Activated CD4-positive, alpha-beta T cell treated with anti-CD3 and anti-CD28 coated beads, Interleukin-2, amount 10 ng/mL, durations not matched to agents 7 days and 5 days (primary cell): ENCODE measurements at regions of chr20 and their contacts with region 1.

Region 1: DNA sequence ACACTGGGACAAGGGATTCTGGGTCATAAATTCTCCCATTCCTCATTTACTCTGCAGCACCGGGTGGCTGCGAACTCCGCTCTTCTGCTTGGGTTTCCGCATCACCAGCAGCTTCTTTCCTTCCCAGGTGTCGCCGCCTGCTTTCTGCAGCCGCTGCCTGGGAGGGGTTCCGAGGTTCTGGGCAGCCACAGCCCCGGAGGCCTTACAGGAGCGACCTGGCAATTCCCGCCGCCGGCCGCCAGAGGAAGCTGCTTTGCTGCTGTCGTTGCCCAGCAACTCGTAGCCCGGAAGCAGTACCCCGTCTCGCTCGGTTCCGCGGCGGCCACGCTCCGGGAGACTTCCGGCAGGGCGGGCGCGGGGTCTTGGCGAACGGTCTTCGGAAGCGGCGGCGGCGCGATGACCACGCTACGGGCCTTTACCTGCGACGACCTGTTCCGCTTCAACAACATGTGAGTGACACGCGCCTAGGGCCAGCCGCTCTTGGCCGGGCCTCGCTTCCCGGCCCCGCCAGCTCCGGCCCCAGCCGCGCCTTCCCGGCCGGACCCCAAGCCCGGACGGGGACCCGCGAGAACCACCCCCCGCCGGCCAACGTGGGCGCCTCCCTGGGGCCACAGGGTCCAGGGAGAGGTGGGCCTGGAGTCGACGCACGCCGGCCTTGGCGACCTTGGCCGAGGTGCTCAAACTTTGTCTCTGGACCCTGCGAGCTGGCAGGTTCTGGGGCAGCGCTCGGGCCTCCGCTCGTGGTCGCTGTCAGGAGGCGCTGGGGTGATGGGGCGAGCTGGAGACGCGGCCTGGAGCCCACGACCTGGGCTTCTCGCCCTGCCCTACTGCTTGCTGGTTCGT is at the start of gene NAA20:
- DNase-seq: peak; percentile 92
- H3K4me3 Mint-ChIP-seq: peak within 1 kb of the TSS; percentile 88
- H3K27ac Mint-ChIP-seq: peak within 1 kb of the TSS; percentile 89
- H3K4me1 Mint-ChIP-seq: peaks cover 56% of the 10 kb centered on the region
- H3K27me3 Mint-ChIP-seq: peaks cover 3% of the 10 kb centered on the region
- total RNA-seq, gene NAA20: 41.0 to 47.2 TPM

Region 2: GRCh38 chr20:19835533-19836222 is 181.5 kb before region 1 on chr20:
- CTCF ChIA-PET with region 1: no interaction called
- POLR2A ChIA-PET with region 1: no interaction called
- DNase-seq: no peak
- H3K4me3 Mint-ChIP-seq: no peak overlapping the region
- H3K27ac Mint-ChIP-seq: no peak overlapping the region
- H3K4me1 Mint-ChIP-seq: peaks cover 4% of the 10 kb centered on the region
- H3K27me3 Mint-ChIP-seq: peaks cover 4% of the 10 kb centered on the region

Region 3: DNA sequence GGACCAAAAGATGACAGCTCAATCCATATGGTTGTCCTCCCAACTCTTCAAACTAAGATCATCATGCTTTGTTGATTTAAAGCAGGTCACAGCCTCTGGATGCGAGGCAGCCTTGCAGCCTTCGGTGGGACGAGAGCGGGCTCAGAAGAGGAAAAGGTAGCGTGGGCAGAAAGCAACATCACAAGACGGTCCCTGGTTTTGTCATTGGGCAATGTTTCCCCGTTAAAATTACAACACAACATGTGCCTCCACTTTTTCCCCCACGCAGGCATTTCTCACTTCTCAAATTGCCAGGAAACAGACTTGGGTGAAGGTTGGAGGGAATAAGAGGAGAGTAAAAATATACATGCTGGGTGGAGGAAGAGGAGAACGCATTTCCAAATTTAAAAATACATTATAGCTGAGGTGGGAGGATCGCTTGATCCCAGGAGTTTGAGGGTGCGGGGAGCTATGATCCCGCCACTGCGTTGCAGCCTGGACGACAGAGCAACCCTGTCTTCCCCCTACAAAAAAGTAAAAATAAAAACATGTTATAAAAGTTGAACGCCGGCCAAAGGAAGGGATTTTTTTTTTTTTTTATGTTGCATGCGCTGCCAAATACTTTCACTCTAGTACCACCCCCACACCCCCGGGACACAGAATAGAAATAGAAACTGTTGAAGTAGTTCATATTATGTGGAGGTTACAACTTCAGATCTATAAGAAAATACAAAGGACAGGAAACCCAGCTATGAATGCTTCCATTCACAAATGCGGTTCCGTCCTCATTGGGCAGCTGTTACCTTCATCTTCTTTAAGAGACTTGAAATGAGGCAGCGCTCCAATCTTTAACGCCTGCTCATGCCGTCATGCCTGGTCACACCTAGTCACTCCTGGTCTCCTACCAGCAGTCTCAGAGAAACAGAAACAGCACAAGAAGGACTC is 13.9 kb before region 1 on chr20:
- CTCF ChIA-PET with region 1: no interaction called
- POLR2A ChIA-PET with region 1: no interaction called
- DNase-seq: peak; percentile 42
- H3K4me3 Mint-ChIP-seq: peak overlapping the region; percentile 40
- H3K27ac Mint-ChIP-seq: peak overlapping the region; percentile 33
- H3K4me1 Mint-ChIP-seq: peaks cover 13% of the 10 kb centered on the region
- H3K27me3 Mint-ChIP-seq: peaks cover 46% of the 10 kb centered on the region

Region 4: DNA sequence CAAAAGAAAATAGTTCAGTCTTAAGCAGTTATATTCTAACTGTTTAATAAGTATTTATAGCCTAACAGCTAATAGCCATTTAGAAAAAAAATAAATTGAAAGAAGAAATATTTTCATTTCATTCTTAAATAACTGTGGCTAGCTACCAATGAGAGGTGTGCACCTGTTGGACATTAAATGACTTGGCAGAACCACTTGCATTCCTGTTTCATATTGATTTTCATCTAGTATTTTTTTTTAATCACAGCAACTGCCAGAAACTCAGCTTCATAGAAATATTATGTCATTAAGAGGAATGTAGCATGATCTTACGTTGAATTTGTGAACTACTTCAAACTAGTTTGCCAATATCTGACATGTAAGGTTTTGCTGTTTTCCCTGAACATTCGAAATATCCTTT is 10.1 kb after region 1 on chr20:
- CTCF ChIA-PET with region 1: interaction called, 11 read pairs
- POLR2A ChIA-PET with region 1: no interaction called
- DNase-seq: no peak
- H3K4me3 Mint-ChIP-seq: no peak overlapping the region
- H3K27ac Mint-ChIP-seq: no peak overlapping the region
- H3K4me1 Mint-ChIP-seq: peaks cover 23% of the 10 kb centered on the region
- H3K27me3 Mint-ChIP-seq: no peaks in the 10 kb centered on the region